WTC11 (cell line): ENCODE measurements at regions of chr12 and their contacts with region 1.

Region 1: DNA sequence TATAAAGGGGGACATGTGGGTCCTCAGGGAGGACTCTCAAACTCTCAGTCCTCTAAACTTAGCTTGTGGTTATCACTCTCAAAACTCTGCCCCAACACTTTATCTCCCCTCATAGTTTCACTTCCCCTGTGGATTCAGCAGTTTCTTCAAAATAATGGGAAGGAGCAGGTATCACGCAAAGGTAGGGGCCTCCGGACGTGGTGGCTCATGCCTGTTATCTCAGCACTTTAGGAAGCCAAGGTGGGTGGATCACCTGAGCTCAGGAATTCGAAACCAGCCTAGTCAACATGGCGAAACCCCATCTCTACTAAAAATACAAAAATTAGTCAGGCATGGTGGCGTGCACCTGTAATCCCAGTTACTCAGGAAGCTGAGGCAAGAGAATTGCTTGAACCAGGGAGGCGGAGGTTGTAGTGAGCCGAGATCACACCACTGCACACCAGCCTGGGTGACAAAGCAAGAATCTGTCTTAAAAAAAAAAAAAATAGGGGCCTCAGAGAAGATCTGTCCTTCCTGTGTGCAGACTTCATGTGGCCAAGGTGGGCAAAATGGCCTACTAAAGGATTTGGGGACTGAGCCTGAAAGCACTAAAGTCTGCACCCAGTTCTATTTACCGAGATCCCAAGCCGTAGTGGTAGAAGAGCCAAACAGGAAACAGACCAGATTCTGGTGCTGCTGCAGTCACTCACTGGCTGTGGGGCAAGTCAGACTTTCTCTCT is 6.4 kb downstream of the ITGB7 start:
- DNase-seq: no peak
- ATAC-seq: no peak
- H3K4me3 Mint-ChIP-seq: no peak overlapping the region
- H3K27ac Mint-ChIP-seq: no peak overlapping the region
- H3K4me1 Mint-ChIP-seq: no peaks in the 10 kb centered on the region
- H3K27me3 Mint-ChIP-seq: peaks cover 54% of the 10 kb centered on the region
- CTCF ChIP-seq: no peak

Region 2: DNA sequence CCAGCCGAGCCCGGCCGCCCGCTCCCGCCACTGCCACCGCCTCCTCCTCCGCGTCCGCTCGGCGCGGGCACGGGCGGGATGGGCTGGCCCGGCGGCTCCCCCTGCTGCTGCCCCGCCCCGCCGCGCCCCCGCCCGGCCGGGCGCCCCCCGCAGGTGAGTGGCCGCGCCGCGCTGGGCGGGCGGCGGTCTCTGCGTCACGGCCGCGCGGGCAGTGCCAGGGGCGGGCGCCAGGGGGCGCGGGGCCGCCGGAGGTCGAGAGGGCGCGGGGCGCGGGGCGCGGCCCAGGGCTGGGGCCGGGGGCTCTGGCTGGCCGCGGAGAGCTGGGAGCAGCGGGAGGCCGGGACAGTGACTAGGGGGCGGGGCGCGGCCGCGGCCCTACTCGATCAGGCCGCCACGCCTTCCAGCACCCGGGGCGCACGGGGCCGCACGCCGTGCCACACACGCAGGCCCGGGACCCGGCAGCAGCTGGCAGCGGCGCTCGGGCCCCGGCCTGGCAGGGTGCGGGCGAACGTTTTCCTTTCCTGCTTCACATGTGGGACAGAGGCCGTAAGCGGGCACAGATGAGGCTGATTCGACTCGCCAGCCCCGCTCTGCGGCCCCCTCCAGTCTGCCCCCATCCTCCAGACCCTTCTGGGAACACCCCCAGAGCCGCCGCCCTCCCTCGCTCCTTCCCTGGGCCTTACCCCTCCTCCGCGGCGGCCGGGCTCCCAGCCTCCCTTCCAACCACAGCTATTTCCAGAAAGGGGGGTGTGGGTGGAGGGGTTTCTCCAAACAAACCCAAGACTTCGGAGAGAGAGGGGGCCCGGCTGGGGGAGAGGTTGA is 153.2 kb before region 1 on chr12:
- CTCF ChIA-PET with region 1: interaction called, 21 read pairs
- POLR2A ChIA-PET with region 1: no interaction called
- DNase-seq: peak; percentile 81
- ATAC-seq: peak; percentile 27
- H3K4me3 Mint-ChIP-seq: peak overlapping the region; percentile 62
- H3K27ac Mint-ChIP-seq: no peak overlapping the region
- H3K4me1 Mint-ChIP-seq: peaks cover 80% of the 10 kb centered on the region
- H3K27me3 Mint-ChIP-seq: peaks cover 40% of the 10 kb centered on the region
- CTCF ChIP-seq: peak; percentile 41; the same call in 1 of the 2 replicates

Region 3: DNA sequence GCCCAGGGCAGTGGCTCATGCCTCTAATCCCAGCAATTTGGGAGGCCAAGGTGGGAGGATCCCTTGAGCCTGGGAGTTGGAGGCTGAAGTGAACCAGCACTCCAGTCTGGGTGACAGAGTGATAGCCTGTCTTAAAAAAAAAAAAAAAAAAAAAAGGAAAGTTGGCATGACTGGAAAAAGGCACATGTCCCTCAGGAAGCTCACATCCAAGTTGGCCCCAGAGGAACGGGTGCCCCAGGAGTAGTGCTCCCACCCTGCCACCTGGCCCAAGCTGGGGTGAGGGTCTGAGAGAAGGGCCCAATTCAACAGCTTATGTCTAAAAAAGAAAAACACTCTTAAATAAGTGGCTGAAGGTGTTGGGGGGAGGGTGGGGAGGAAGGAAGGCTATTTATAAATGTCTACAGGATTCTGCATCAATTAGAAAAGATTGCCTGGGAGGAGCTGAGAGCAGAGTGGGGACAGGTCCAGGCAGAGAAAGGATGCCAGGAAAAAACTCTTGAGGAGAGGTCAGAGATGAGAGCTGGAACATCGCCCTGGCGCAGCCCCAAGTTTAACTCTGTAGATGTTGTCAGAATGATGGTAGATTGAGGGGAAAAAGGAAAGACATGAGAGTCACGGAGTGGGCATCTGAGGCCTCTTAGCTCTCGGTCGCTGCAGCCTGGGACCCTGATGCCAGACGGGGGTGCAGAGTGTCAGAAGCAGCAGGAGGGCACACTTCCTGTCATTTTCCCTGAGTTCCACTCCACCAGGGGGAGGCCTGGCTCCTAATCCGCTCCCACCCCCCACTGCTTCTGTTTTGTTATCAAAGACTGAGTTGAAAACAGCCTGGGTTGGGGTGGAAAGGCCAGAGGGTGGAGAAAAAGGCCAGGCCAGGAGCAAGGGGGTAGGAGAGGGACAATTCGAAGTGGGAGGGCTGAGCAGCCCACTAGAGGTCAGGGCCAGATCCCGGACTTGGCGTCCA is 128.7 kb before region 1 on chr12:
- CTCF ChIA-PET with region 1: interaction called, 105 read pairs
- POLR2A ChIA-PET with region 1: no interaction called
- DNase-seq: no peak
- ATAC-seq: no peak
- H3K4me3 Mint-ChIP-seq: no peak overlapping the region
- H3K27ac Mint-ChIP-seq: no peak overlapping the region
- H3K4me1 Mint-ChIP-seq: peaks cover 28% of the 10 kb centered on the region
- H3K27me3 Mint-ChIP-seq: no peaks in the 10 kb centered on the region; the same call in none of the 2 replicates
- CTCF ChIP-seq: no peak

Region 4: DNA sequence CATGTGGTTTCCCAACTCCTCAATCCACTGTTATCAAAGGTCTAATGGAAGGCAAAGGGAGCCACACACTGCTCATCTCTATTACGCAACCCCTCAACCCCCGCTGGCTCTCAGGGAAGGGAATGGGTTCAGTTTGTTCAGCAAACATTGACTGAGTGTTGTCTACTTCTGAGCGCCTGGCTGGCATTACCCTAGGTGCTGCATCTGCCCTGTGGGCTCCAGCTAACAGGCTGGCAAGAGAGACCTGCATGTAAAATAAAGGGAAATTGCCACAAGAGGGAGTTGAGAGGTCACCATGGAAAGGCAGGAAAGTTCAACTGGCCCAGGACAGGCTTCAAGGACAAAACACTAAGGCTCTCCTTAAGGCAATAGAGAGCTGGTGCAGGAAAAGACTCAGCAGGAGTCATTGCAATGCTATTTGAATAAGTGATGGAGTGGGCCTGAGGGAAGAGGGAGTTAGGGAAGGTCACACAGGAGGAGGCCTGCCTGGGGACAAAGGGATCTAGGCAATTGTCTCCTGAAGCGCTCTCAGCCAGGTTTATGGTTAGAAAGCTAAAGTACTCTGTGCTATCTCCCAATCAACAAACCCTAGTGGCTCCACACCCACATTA is 25.6 kb before region 1 on chr12:
- CTCF ChIA-PET with region 1: interaction called, 62 read pairs
- POLR2A ChIA-PET with region 1: no interaction called
- DNase-seq: peak; percentile 63
- ATAC-seq: peak; percentile 97
- H3K4me3 Mint-ChIP-seq: no peak overlapping the region
- H3K27ac Mint-ChIP-seq: no peak overlapping the region
- H3K4me1 Mint-ChIP-seq: peaks cover 23% of the 10 kb centered on the region
- H3K27me3 Mint-ChIP-seq: peaks cover 100% of the 10 kb centered on the region
- CTCF ChIP-seq: no peak

Region 5: DNA sequence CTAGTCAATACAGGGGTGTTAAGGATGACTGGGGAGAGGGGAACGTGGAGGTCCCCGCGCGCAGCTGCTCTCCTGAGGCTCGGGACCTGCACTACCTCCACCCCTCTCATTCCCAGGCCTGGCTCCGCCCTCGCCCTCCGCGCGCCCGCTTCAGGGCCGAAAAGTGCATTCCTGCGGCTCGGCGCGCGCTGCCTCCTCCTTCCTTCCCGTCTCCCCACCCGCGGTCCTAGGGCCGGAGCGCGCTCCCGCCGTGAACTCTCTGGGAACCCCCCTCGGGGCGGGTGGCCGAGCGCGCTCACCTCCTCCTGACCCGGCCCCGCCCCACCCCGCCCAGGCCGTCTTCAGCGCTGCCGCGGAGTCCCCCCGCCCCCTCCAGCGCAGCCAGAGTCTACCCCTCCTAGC is 20.2 kb after region 1 on chr12:
- CTCF ChIA-PET with region 1: interaction called, 136 read pairs
- POLR2A ChIA-PET with region 1: no interaction called
- DNase-seq: peak; percentile 94
- ATAC-seq: peak; percentile 38
- H3K4me3 Mint-ChIP-seq: peak overlapping the region; percentile 90
- H3K27ac Mint-ChIP-seq: peak overlapping the region; percentile 98
- H3K4me1 Mint-ChIP-seq: peaks cover 75% of the 10 kb centered on the region
- H3K27me3 Mint-ChIP-seq: peaks cover 7% of the 10 kb centered on the region; the same call in 1 of the 2 replicates
- CTCF ChIP-seq: no peak

Region 6: DNA sequence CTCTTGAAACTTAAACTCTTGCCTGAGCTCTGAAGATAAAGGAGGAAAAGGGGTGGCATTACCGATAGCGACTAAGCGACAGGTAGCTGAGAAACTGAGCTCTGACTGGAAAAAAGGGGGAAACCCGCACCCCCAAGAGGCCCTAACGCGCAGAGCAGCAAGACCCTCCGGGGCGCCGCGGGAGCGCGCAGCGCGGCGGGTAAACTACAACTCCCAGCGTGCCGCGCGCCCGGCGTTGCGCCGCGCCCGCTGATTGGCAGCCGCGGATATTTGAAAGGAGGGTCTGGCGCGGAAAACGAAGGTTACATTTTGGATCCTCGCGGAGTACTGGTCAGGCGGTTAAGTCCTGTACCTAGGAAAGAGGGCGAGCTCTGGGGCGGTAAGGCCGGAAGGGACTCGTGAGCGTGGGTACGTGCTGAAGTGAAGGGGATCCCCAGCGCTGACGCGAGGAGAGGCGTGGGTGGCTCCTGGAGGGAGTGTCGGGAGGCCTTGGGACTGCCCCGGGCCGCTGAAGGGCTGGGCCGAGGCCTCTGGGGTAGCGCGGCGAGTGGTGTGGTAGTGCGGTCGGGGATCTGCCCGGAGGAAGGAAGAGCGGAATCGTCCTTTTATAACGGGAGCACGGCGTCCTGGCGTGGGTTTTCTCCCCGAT is 67.5 kb after region 1 on chr12 and contains the start of gene ESPL1:
- CTCF ChIA-PET with region 1: interaction called, 32 read pairs
- POLR2A ChIA-PET with region 1: no interaction called
- DNase-seq: peak; percentile 89
- ATAC-seq: peak; percentile 88
- H3K4me3 Mint-ChIP-seq: peak within 1 kb of the TSS; percentile 100
- H3K27ac Mint-ChIP-seq: peak within 1 kb of the TSS; percentile 86
- H3K4me1 Mint-ChIP-seq: peaks cover 29% of the 10 kb centered on the region
- H3K27me3 Mint-ChIP-seq: no peaks in the 10 kb centered on the region; the same call in 1 of the 2 replicates
- CTCF ChIP-seq: peak; percentile 26; the same call in 1 of the 2 replicates
- total RNA-seq, gene ESPL1: 41.5 to 61.4 TPM (median 48.5 TPM) in 3 replicates